Panc1 (cell line): ENCODE measurements at regions of chr1 and their contacts with region 1.

Region 1: DNA sequence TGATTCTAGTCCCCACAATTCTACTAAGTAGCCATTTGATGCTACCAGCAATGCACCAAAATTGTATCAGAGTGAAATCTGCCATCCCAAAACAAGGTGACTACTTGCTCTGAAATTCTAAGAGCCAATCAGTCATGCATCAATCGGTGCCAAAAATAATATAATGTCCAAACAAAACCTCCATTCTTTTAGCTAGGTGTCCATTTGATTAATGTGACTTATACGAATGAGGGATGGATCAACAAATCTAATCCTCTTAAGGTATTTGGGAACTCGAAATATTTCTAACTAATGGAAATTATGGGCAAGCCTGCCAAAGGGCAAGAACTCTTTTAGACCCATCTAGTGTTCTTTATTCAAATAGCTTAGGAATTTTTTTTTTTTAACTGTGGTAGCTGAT is 66.4 kb upstream of the NEK2 start:
- DNase-seq: no peak
- ATAC-seq: no peak
- H3K4me3 ChIP-seq: no peak overlapping the region
- H3K27ac ChIP-seq: peak overlapping the region; percentile 59
- H3K4me1 ChIP-seq: peaks cover 51% of the 10 kb centered on the region
- H3K27me3 ChIP-seq: no peaks in the 10 kb centered on the region
- CTCF ChIP-seq: no peak

Region 2: DNA sequence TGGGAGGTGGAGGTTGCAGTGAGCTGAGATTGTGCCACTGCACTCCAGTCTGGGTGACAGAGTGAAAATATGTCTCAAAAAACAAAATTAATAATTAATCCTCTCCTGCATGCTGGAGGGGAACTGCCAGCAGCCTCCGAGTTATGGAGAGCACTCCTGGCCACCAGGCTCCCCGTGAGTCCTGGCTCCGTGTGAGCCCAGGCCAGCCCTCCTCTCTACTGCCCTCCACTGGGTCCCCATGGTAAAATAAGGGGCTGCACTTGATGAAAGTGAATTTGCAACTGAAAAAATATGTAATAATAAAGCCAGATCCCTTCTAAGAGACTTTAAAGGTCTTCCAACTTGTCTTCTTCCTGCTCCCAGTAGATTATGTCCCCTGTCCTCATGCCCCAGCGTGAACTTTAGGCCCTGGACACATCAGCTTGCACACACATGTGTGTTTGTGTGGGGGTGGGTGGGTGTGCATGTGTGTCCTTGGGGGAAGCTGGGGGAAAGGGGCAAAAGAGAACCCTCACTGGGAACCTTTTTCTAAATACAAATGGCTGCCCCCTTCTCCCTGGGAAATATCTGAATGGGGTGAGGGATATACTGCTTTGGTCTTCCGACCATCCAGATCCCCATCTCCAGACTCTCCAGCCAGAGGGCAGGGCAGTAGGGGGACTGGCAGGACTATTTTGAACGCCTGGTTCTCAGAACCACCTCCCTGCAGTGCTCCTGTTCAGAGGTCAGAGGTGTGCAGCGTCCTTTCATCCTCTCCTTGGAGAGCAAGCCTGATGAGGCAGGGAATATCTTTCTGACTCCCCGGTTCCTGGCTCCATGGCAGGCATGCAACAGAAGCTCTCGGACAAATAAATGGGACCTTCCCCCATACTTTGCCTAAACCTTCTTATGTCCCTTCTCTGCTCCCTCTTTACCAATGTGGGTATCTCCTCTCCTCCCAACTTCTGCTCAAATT is 92.5 kb before region 1 on chr1:
- CTCF ChIA-PET with region 1: no interaction called
- POLR2A ChIA-PET with region 1: no interaction called
- in situ Hi-C with region 1: no loop called
- intact Hi-C with region 1: no loop called
- DNase-seq: no peak
- ATAC-seq: no peak
- H3K4me3 ChIP-seq: no peak overlapping the region
- H3K27ac ChIP-seq: no peak overlapping the region
- H3K4me1 ChIP-seq: peaks cover 26% of the 10 kb centered on the region
- H3K27me3 ChIP-seq: no peaks in the 10 kb centered on the region
- CTCF ChIP-seq: no peak; the same call in none of the 2 replicates

Region 3: DNA sequence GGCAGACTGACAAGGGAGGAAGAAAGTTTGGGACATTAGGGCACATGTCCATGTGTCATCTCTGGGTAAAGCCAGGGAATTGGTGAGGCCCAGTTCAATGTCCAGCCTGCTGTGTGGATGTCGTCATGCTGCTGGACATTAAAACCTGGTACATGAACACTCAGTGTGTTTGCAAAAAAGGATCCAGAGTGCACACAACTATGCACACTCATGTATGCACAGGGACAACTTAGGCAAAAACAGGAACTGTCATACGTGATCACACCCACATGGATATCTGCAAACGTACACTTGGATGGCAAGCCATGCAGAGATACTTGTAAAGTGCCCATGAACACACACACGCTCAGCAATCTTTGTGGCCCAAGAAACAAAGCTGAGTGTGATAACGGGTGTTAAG is 18.5 kb before region 1 on chr1:
- CTCF ChIA-PET with region 1: no interaction called
- POLR2A ChIA-PET with region 1: interaction called, 10 read pairs
- in situ Hi-C with region 1: no loop called
- intact Hi-C with region 1: no loop called
- DNase-seq: no peak
- ATAC-seq: no peak
- H3K4me3 ChIP-seq: no peak overlapping the region
- H3K27ac ChIP-seq: 0 out of 2 replicates have a peak overlapping the region, but pooled peaks have one; percentile 40
- H3K4me1 ChIP-seq: no peaks in the 10 kb centered on the region; the same call in 1 of the 2 replicates
- H3K27me3 ChIP-seq: no peaks in the 10 kb centered on the region
- CTCF ChIP-seq: no peak